Aorta (tissue), 5 donors: ENCODE measurements at regions of chr16 and their contacts with region 1.

Region 1: GRCh38 chr16:67029249-67030096 is 524 bp downstream of the CBFB start:
- DNase-seq: peak; percentile 79 to 91
- ATAC-seq: peak; percentile 82
- H3K4me3 ChIP-seq: peak overlapping the region; percentile 86 to 93
- H3K27ac ChIP-seq: peak overlapping the region; percentile 83 to 96
- H3K4me1 ChIP-seq: peaks cover 0 to under 1% of the 10 kb centered on the region in 2 donors
- H3K27me3 ChIP-seq: no peaks in the 10 kb centered on the region

Region 2: DNA sequence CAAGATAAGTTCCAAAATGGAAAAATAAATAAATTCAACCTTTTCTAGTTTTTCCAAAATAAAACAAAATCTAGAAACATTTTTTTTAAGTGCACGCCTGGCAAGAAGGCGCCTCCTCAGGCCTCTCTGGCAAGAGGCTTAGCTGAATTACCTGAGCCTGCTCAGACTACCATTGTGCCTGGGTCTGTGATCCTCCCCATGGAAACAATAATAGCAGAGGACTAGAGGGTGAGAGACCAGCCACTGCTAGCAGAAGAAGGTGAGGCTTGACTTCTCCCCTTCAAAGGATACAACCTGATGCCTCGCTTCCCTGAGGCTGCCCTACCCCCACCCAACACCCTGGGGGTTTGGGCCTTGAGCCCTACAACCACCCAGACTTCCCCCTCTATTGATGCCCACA is 242.9 kb before region 1 on chr16:
- intact Hi-C with region 1: no loop called
- DNase-seq: no peak
- ATAC-seq: no peak
- H3K4me3 ChIP-seq: no peak overlapping the region
- H3K27ac ChIP-seq: no peak overlapping the region
- H3K4me1 ChIP-seq: no peaks in the 10 kb centered on the region
- H3K27me3 ChIP-seq: peaks cover 0 to 2% of the 10 kb centered on the region in 2 donors

Region 3: DNA sequence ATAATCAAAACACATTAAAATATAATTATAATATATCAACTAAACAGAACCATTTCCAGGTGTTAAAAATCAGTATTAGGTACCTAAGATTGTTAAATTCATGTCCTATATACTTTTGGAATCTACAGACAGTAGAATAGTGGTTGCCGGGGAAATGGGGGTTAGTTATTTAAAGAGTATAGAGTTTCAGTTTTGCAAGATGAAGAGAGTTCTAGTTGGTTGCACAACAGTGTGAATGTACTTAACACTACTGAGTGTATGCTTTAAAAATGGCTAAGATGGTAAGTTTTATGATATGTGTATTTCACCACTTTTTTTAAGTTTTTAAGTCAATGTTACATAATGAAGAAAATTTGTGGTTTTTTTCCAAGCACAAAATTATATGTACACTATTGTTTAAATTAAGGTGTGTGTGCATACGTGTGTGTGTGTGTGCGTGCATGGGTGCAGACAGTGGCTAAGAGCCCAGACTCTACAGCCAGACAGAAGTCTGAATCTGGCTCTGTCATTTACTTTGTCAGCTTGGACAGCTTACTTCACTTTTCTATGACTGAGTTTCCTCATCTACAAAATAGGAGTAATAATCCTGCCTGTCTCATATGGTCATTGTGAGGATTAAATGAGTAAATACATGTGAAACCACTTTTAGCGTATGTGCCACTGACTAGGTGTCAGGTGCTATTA is 55.0 kb after region 1 on chr16:
- intact Hi-C with region 1: loop called in 1 of 2 experiments (anchors 10 kb)
- DNase-seq: no peak
- ATAC-seq: no peak
- H3K4me3 ChIP-seq: no peak overlapping the region
- H3K27ac ChIP-seq: no peak overlapping the region
- H3K4me1 ChIP-seq: peaks cover 0 to 3% of the 10 kb centered on the region in 2 donors
- H3K27me3 ChIP-seq: no peaks in the 10 kb centered on the region

Region 4: GRCh38 chr16:67372664-67373063 is 343.2 kb after region 1 on chr16:
- intact Hi-C with region 1: no loop called
- DNase-seq: no peak
- ATAC-seq: no peak
- H3K4me3 ChIP-seq: no peak overlapping the region
- H3K27ac ChIP-seq: no peak overlapping the region
- H3K4me1 ChIP-seq: no peaks in the 10 kb centered on the region
- H3K27me3 ChIP-seq: peaks cover 0 to 3% of the 10 kb centered on the region in 2 donors